ENCODE measurements at regions of chr17 and their contacts with region 1.

Region 1: DNA sequence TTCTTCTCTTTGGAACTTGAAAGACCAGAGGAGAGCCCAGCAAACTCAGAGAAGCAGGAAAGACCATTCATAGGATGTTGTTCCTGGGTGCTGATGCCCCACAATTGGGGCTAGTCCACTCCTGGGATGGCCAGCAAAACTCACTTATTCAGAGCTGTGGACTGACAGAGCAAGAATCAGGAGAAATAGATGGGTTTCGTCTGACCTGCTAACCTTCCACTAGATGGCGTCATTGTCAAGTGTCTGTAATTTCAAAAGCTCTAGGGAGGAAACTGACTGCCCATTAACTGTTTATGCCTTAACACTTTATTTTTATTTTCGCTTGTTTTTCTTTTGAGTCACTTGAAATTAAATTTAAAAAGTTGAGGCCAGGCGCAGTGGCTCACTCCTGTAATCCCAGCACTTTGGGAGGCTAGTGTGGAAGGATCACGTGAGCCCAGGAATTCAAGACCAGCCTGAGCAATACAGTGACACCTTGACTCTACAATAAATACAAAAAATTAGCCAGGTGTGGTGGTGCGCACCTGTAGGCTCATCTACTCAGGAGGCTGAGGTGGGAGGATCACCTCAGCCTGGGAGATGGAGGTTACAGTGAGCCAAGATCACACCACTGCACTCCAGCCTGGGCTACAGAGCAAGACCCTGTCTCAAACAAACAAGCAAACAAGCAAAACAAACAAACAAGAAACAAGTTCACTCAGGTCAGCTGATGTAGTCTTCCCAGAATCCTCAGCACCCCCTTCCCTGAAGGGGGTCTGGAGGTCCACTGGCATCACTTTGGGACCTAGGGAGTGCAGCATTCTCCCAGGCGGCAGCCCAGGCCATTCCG is 28.6 kb upstream of the MILR1 start:
- DNase-seq: peak; percentile 91
- ATAC-seq: peak; percentile 73
- H3K4me3 ChIP-seq: no peak overlapping the region
- H3K27ac ChIP-seq: no peak overlapping the region
- H3K4me1 ChIP-seq: peaks cover 10% of the 10 kb centered on the region
- H3K27me3 ChIP-seq: no peaks in the 10 kb centered on the region
- CTCF ChIP-seq: peak; percentile 93

Region 2: DNA sequence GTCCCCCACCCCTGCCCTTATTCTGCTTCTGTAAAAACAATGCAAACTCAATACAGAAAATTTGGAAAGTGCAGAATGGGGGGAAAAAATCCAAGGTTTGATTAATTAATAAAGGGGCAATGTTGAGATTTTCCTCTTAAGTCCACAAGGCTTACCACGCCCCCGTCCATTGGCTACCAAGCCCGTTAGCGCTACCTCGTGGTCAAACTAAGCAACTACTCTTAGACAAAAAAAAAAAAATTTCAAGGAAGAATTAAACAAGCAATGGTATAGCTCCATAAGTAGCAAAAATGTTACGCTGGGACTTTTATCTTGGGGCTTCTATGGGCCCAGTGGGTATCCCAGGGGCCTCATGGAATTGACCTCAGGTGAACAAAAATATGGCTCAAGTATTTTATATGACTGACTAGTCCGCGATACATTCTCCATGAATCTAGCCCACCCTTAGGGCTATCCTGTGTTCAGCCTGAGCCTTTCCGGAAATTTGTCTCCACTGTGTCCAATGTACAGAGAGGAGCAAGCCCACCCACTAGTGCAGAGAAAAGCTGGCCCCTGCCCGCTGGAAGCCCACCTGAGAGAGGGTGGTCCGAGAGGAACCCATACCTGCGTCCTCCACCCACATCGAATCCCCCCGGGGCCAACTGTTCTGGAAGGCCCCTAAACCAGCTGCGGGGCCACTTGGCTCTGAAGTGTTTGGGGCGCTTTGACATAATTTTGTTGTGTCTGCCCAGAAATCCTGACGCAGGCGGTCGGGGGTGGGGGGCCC is 138.2 kb before region 1 on chr17:
- CTCF ChIA-PET with region 1: interaction called, 11 read pairs
- POLR2A ChIA-PET with region 1: no interaction called
- intact Hi-C with region 1: no loop called
- DNase-seq: peak; percentile 85
- ATAC-seq: peak; percentile 38
- H3K4me3 ChIP-seq: peak overlapping the region; percentile 2; the same call in 1 of the 2 replicates
- H3K27ac ChIP-seq: no peak overlapping the region
- H3K4me1 ChIP-seq: peaks cover 14% of the 10 kb centered on the region
- H3K27me3 ChIP-seq: no peaks in the 10 kb centered on the region
- CTCF ChIP-seq: peak; percentile 95

Region 3: GRCh38 chr17:64320613-64321553 is 99.5 kb before region 1 on chr17:
- CTCF ChIA-PET with region 1: interaction called, 12 read pairs
- POLR2A ChIA-PET with region 1: no interaction called
- intact Hi-C with region 1: loop called (anchors 1 kb)
- DNase-seq: peak; percentile 98
- ATAC-seq: peak; percentile 82
- H3K4me3 ChIP-seq: no peak overlapping the region
- H3K27ac ChIP-seq: peak overlapping the region; percentile 56
- H3K4me1 ChIP-seq: peaks cover 12% of the 10 kb centered on the region
- H3K27me3 ChIP-seq: no peaks in the 10 kb centered on the region
- CTCF ChIP-seq: peak; percentile 96

Region 4: GRCh38 chr17:64477849-64478248 is 57.5 kb after region 1 on chr17:
- CTCF ChIA-PET with region 1: interaction called, 4 read pairs
- POLR2A ChIA-PET with region 1: no interaction called
- intact Hi-C with region 1: loop called (anchors 1 kb)
- DNase-seq: no peak
- ATAC-seq: no peak
- H3K4me3 ChIP-seq: no peak overlapping the region
- H3K27ac ChIP-seq: no peak overlapping the region
- H3K4me1 ChIP-seq: no peaks in the 10 kb centered on the region
- H3K27me3 ChIP-seq: no peaks in the 10 kb centered on the region
- CTCF ChIP-seq: no peak

Region 5: DNA sequence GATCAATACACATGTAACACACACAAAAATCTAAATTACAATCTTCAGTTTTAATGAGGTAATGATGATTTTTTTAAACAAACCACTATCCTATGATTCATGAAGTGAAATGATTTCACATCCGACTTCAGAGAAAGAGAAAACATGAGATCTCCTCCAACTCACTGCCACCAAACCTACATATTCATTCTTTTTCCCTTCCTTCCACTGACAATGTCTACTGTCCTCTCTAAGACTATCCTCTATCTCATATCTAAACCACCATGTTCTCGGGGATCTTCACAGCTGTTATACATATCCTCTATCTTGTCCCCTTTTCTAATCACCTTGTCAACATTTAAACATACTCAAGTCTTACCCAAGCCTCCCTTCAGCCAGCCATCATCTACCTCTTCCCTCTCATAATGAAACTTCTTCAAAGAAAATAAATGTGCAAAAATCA is 188.2 kb after region 1 on chr17:
- CTCF ChIA-PET with region 1: interaction called, 4 read pairs
- POLR2A ChIA-PET with region 1: no interaction called
- intact Hi-C with region 1: loop called (anchors 10 kb)
- DNase-seq: peak; percentile 53
- ATAC-seq: peak; percentile 93
- H3K4me3 ChIP-seq: no peak overlapping the region
- H3K27ac ChIP-seq: peak overlapping the region; percentile 44
- H3K4me1 ChIP-seq: peaks cover 10% of the 10 kb centered on the region
- H3K27me3 ChIP-seq: no peaks in the 10 kb centered on the region
- CTCF ChIP-seq: no peak

Region 6: DNA sequence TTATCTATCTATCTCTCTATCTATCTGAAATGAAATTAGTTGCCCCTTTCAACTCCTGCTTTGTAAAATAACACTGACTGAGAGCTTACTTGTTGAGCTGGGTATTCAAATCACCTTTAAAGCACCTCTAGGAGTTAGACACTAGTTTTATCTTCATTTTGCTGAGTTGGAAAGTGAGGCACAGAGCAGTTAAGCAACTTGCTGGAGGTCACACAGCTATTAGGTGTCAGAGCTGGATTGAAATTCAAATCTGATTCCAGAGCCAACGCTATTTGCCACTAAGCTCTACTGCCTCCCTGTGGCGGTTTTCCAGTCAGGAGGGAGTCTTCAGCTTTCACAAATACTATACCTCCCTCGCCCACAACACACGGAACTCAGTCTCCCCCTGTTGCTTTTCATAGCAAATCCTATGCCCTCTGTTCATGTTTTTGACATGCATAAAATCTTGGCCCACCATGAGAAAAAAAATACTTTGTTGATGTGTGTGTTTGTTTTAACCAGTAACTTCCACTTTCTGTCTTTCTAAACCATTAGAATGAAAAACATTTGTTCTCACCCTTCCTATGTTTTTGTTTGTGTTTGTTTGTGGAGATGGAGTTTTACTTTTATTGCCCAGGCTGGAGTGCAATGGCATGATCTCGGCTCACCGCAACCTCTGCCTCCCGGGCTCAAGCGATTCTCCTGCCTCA is 316.6 kb after region 1 on chr17:
- CTCF ChIA-PET with region 1: no interaction called
- POLR2A ChIA-PET with region 1: no interaction called
- intact Hi-C with region 1: loop called (anchors 10 kb)
- DNase-seq: peak; percentile 83
- ATAC-seq: peak; percentile 47
- H3K4me3 ChIP-seq: no peak overlapping the region
- H3K27ac ChIP-seq: no peak overlapping the region
- H3K4me1 ChIP-seq: peaks cover 20% of the 10 kb centered on the region
- H3K27me3 ChIP-seq: no peaks in the 10 kb centered on the region
- CTCF ChIP-seq: peak; percentile 93

Measured in PC-3 (cell line).